Posterior cingulate gyrus (tissue), 11 donors: ENCODE measurements at regions of chr12 and their contacts with region 1.

Region 1: GRCh38 chr12:49515266-49515665 is 23.6 kb upstream of the KCNH3 start:
- DNase-seq: no peak

Region 2: DNA sequence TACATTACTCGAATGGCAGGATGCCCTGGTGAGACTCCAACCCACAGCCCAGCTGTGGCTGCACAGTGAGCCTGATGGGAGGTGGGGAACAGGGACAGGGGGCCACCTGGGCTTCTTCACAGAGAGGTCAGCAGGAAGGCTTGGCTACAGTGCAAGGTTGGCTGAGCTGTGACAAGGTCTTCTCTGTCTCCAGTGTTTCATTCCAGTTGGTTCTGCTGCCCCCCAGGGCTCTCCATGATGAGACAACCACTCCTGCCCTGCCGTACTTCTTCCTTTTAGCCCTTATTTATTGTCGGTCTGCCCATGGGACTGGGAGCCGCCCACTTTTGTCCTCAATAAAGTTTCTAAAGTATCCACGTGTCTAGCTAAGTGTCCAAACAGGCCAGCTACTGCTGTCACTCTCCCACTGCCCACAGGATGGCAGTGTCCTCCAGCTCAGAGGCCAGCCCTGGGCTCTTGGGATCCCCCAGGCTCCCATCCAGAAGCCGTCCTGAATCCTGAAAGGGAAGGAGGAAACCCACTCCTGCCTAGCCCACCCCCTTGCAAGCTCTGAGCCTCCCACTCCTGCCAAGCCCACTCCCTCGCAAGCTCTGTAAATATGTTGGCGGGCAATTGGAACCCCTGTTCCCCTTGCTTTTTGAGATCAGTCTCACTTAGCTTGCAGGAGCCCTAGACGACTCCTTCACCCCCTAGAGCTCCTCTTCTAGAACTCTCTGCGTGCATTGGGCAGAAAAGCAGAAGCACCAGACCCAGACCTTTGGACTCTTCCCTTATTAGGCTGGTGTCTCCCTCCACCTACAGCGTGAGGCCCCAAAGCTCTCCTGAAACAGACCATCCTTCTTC is 183.7 kb before region 1 on chr12:
- intact Hi-C with region 1: loop called (anchors 1 kb)
- DNase-seq: peak in 9 of 10 donors; percentile 51 to 95 (median 75)

Region 3: DNA sequence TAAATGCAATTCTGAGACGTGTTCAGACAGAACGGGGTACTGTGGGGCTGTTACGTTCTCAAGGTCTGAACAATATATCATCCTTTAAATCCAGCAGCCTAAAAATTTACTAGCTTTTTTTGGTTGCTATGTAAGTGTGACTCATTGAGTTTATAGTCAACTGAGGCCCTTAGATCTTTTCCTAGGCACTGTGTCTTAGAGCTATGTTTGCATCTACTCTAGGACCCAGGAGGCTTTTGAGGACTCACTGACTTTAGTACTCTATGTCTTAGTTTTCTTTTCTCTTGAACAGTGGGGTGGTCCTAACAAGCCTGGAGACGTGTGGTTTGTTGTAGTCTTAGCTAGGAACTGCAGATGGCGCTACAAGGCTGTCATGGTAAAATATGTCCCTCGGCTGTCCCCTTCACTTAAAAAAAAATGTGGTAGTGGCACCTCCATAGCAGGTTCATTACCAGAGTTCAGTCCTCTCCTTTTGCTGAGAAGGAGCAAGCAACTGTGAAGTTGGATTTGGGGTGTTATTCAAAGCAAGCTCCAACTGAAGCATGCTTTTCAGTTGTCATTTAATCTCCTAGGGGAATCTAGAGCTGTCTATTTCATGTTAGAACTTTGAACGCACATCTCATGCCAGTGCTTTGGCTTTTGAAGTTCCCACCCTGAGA is 156.7 kb before region 1 on chr12:
- intact Hi-C with region 1: loop called (anchors 2 kb)
- DNase-seq: peak in 5 of 10 donors; percentile 33 to 65 (median 34)

Region 4: DNA sequence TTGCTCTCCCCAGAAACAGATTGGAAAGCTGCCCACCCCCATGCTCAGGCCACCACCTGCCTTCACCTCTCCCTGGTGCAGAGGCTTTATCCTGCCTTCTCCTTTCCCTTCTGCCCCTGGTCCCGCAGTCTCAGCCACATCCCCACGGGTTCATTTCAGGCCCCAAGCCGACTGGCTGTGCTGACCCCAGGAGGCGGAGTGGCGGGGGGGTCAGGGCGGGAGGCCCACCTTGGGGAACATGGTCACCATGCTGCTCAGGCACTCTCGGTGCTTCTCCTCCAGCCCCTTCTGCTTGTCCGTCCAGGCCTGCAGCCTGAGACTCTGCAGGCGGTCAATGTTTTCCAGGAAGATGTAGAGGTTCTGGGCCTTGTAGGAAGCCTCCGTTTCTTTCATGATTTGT is 83.3 kb after region 1 on chr12:
- intact Hi-C with region 1: no loop called
- DNase-seq: peak in 1 of 10 donors; percentile 64

Region 5: GRCh38 chr12:49990273-49990672 is 475.0 kb after region 1 on chr12:
- intact Hi-C with region 1: no loop called
- DNase-seq: no peak